Activated CD8-positive, alpha-beta T cell treated with anti-CD3 and anti-CD28 coated beads for 36 hours (primary cell): ENCODE measurements at regions of chr6 and their contacts with region 1.

Region 1: DNA sequence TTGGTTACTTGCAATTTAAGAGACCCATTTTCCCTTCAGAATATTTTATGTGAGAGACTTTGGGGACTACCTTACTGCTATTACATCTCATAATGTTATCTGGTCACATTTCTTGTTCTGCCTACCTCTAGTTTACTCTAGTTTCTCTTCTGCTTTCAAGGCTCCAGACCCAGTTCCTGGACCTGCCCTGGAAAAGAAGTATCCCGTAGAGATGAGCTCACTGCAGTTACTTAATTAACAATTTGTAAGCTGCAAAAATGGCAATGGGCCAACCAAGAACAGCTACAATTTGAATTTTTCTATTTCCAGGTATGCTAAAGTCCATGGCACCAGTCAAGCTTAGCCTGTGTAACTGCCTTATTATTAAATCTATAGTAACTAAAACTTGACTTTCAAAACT is 25.0 kb downstream of the TAB2 start:
- DNase-seq: no peak
- ATAC-seq: no peak
- H3K4me3 Mint-ChIP-seq: peak overlapping the region; percentile 11
- H3K27ac Mint-ChIP-seq: peak overlapping the region; percentile 89
- H3K4me1 Mint-ChIP-seq: peaks cover 68% of the 10 kb centered on the region
- H3K27me3 Mint-ChIP-seq: no peaks in the 10 kb centered on the region
- CTCF ChIP-seq: no peak

Region 2: GRCh38 chr6:149211046-149211571 is 131.4 kb before region 1 on chr6:
- CTCF ChIA-PET with region 1: no interaction called
- POLR2A ChIA-PET with region 1: no interaction called
- intact Hi-C with region 1: loop called (anchors 5 kb)
- DNase-seq: peak; percentile 61
- ATAC-seq: peak; percentile 69
- H3K4me3 Mint-ChIP-seq: peak overlapping the region; percentile 17
- H3K27ac Mint-ChIP-seq: no peak overlapping the region
- H3K4me1 Mint-ChIP-seq: peaks cover 3% of the 10 kb centered on the region
- H3K27me3 Mint-ChIP-seq: no peaks in the 10 kb centered on the region
- CTCF ChIP-seq: no peak

Region 3: GRCh38 chr6:149293244-149293643 is 49.3 kb before region 1 on chr6:
- CTCF ChIA-PET with region 1: no interaction called
- POLR2A ChIA-PET with region 1: no interaction called
- intact Hi-C with region 1: no loop called
- DNase-seq: no peak
- ATAC-seq: no peak
- H3K4me3 Mint-ChIP-seq: no peak overlapping the region
- H3K27ac Mint-ChIP-seq: no peak overlapping the region
- H3K4me1 Mint-ChIP-seq: peaks cover 8% of the 10 kb centered on the region
- H3K27me3 Mint-ChIP-seq: no peaks in the 10 kb centered on the region
- CTCF ChIP-seq: no peak

Region 4: GRCh38 chr6:149311296-149311695 is 31.2 kb before region 1 on chr6:
- CTCF ChIA-PET with region 1: no interaction called
- POLR2A ChIA-PET with region 1: no interaction called
- intact Hi-C with region 1: no loop called
- DNase-seq: no peak
- ATAC-seq: no peak
- H3K4me3 Mint-ChIP-seq: no peak overlapping the region
- H3K27ac Mint-ChIP-seq: no peak overlapping the region
- H3K4me1 Mint-ChIP-seq: peaks cover 14% of the 10 kb centered on the region
- H3K27me3 Mint-ChIP-seq: no peaks in the 10 kb centered on the region
- CTCF ChIP-seq: no peak

Region 5: GRCh38 chr6:149887343-149887742 is 544.8 kb after region 1 on chr6:
- CTCF ChIA-PET with region 1: no interaction called
- POLR2A ChIA-PET with region 1: no interaction called
- intact Hi-C with region 1: no loop called
- DNase-seq: no peak
- ATAC-seq: no peak
- H3K4me3 Mint-ChIP-seq: no peak overlapping the region
- H3K27ac Mint-ChIP-seq: no peak overlapping the region
- H3K4me1 Mint-ChIP-seq: no peaks in the 10 kb centered on the region
- H3K27me3 Mint-ChIP-seq: peaks cover 4% of the 10 kb centered on the region
- CTCF ChIP-seq: no peak